ENCODE measurements at regions of chr14 and their contacts with region 1.

Region 1: GRCh38 chr14:24135834-24136542 is at the start of gene PSME1:
- H3K4me3 ChIP-seq: peak within 1 kb of the TSS; percentile 92
- H3K27ac ChIP-seq: peak within 1 kb of the TSS; percentile 90
- H3K4me1 ChIP-seq: peaks cover 4% of the 10 kb centered on the region; the same call in 1 of the 2 replicates
- CTCF ChIP-seq: peak; percentile 8; the same call in 1 of the 2 replicates

Region 2: DNA sequence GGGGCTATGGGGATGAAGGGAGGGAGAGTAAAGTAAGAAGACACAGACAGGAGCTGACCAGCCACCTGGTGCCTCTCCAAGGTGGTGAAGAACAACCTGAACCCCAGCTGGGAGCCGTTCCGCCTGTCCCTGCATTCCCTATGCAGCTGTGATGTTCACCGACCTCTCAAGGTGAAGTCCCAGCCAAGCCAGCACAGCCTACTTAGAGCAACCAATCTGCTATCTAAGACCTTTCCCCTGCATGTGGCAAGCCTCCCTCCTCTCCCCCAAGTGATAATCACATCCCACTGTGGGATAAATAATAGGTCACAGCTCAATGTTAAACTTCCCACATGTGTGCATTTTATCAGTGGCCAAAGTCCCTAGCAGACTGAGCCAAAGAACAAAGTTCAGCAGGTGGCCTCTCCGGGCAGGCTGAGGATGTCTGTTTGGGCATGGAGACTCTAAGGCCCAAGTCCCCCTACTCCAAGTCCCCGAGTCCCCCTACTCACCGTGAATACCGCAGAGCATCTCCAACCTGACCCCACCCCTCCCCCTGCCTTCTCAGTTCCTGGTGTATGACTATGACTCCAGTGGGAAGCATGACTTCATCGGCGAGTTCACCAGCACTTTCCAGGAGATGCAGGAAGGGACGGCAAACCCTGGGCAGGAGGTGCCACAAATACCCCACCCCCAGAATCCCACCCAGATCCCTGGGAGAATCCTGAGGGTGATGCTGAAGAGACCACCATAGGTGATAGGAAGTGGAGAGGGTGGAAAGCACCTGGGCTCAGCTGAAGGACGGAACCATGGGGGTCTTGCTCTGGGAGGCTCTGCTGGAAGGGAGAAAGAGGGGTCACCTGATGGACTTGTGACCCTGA is 61.1 kb before region 1 on chr14:
- CTCF ChIA-PET with region 1: no interaction called
- POLR2A ChIA-PET with region 1: no interaction called
- H3K4me3 ChIP-seq: no peak overlapping the region
- H3K27ac ChIP-seq: no peak overlapping the region
- H3K4me1 ChIP-seq: peaks cover 3% of the 10 kb centered on the region; the same call in 1 of the 2 replicates
- CTCF ChIP-seq: no peak

Region 3: DNA sequence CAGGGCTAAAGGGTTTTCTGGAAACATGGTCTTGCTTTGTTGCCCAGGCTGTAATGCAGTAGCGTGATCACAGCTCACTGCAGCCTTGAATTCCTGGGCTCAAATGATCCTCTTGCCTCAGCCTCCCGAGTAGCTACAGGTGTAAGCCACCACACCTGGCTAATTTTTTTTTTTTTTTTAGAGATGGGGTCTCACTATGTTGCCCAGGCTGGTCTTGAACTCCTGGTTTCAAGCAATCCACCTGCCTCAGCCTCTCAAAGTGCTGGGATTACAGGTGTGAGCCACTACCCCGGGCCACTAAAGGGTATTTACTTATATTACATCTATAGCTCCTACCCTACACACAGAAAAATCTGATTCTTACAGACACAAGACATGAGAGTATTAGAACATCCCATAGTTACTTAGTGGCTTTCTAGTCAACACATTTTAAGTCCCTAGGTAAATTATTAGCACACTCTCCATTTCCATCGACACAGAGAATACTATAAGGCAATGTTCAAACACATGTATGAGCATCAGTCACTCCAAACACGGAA is 27.6 kb before region 1 on chr14:
- CTCF ChIA-PET with region 1: interaction called, 5 read pairs
- POLR2A ChIA-PET with region 1: interaction called, 163 read pairs
- H3K4me3 ChIP-seq: no peak overlapping the region
- H3K27ac ChIP-seq: no peak overlapping the region
- H3K4me1 ChIP-seq: no peaks in the 10 kb centered on the region
- CTCF ChIP-seq: no peak

Region 4: DNA sequence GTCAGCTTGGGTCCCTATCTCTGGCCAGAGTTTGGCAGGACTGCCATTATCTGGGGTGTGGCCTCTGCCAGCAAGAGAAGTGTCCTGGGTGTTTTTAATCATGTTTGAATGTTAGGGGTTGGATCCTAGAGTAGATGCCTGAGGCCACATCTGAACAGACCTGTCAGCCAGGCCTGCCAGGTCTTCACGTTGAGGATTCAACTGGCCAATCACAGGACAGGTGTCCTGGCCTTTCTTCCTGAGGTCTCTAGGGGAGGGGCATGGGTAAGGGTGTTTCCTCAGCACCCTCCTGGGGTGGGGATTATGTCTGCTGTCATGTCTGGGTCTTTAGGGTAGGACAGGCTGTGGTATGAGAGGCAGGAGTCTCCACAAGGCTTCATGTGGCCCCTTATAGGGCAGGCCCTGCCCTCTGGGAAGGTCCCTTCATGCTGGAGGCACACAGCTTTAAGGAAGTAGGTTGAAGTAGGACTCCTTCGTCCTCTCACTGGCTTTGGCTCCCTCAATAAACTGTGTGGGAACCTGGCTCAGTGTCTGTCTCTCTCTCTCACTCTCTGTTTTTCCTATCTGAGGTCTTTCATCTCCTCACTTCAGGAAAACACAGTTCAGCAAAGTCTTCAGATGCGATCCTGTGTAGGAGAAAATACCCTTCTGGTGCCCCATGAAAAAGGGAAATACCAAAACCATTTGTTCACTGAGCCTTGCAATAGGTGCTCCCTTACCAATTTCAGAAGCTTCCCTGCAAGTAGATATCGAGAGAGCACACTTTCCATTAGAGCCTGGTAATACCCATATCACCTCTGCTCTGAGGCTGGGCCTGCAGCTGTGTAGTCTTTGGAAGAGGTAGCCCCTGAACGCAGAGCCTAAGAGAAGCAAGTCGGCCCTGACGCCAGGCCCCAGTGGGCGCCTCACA is 12.2 kb before region 1 on chr14:
- CTCF ChIA-PET with region 1: interaction called, 6 read pairs
- POLR2A ChIA-PET with region 1: interaction called, 163 read pairs
- H3K4me3 ChIP-seq: no peak overlapping the region
- H3K27ac ChIP-seq: no peak overlapping the region
- H3K4me1 ChIP-seq: no peaks in the 10 kb centered on the region
- CTCF ChIP-seq: no peak

Region 5: DNA sequence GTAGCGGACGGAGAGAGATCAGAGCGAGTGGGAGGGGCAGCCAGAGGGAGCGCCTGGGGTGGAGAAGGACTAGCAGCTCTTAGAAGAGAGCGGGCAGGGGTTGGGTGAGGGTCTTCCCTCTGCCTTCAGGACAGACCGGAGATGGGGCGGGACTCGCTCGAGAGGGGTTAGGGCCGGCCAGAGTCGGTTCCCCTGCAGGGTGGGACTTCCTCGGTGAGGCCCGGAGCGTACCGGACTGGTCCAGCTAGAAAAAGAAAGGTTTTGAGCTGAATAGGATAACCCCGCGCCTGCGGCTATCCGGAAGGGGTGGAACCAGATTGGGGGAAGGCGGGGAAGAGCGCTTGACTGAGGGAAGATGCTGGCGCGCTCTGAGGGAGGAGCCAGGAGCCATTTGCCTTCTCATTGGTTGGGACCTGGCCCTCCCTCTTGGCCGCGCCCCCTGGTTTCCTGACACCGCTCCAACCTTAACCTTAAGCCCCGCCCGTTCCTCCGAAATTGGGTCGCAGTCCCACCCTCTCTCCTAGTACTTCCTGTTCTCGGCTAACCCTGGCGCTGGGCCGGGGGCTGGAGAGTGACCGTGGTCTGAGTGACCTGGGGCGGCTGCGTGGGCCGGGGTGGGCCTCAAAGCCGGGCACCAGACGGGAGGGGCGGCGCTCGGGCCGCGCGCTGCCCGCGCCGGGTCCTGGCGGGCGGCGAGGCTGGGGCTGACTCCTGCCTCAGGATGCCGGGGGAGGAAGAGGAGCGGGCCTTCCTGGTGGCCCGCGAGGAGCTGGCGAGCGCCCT is 11.2 kb after region 1 on chr14 and contains the start of gene RNF31:
- CTCF ChIA-PET with region 1: interaction called, 4 read pairs
- POLR2A ChIA-PET with region 1: interaction called, 79 read pairs
- H3K4me3 ChIP-seq: peak within 1 kb of the TSS; percentile 91
- H3K27ac ChIP-seq: peak within 1 kb of the TSS; percentile 81; the same call in 1 of the 2 replicates
- H3K4me1 ChIP-seq: peaks cover 8% of the 10 kb centered on the region
- CTCF ChIP-seq: no peak

Region 6: DNA sequence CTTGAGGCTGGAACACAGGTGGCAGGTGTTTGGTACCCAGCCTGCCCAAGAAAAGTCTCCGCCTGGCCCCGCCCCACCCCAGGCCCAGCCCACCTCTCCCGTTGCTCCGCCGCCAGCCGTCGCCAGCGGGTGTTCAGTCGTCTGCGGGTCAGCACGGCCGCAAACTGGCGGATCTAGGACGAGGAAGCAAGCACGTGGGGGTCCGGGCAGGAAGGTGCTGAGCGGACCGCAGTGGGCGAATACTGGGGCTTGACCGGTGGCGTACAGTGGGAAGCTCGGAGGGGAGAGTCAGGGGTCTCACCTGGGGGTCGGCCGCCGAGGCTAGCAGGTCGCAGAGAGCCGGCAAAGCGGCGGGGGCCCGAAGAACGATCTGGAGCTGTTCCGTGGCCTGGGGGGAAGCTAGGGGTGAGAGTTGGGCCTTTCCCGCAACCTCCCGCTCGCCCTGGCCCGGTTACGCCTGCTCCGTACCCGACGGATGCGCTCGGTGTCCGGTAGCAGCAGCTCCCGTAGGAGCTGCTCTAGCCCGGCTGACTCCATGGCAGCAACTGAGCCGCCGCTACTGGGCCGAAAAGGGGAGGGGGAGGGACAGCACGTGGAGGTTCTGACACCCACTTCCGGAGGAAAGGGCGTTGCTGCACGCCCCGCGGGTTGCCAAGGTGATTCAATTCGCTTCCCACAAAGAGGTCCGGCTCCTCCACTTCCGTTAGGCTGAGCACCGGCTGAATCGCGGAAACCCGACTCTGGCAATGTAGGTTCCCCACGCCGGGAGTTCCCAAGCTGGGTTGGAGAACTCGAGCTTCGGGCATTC is 52.5 kb after region 1 on chr14 and contains the start of gene IPO4:
- CTCF ChIA-PET with region 1: no interaction called
- POLR2A ChIA-PET with region 1: interaction called, 10 read pairs
- H3K4me3 ChIP-seq: peak within 1 kb of the TSS; percentile 84
- H3K27ac ChIP-seq: peak within 1 kb of the TSS; percentile 87
- H3K4me1 ChIP-seq: peaks cover 7% of the 10 kb centered on the region; the same call in 1 of the 2 replicates
- CTCF ChIP-seq: no peak; the same call in 1 of the 2 replicates